Heart left ventricle (tissue), 16 donors: ENCODE measurements at regions of chr3 and their contacts with region 1.

Region 1: DNA sequence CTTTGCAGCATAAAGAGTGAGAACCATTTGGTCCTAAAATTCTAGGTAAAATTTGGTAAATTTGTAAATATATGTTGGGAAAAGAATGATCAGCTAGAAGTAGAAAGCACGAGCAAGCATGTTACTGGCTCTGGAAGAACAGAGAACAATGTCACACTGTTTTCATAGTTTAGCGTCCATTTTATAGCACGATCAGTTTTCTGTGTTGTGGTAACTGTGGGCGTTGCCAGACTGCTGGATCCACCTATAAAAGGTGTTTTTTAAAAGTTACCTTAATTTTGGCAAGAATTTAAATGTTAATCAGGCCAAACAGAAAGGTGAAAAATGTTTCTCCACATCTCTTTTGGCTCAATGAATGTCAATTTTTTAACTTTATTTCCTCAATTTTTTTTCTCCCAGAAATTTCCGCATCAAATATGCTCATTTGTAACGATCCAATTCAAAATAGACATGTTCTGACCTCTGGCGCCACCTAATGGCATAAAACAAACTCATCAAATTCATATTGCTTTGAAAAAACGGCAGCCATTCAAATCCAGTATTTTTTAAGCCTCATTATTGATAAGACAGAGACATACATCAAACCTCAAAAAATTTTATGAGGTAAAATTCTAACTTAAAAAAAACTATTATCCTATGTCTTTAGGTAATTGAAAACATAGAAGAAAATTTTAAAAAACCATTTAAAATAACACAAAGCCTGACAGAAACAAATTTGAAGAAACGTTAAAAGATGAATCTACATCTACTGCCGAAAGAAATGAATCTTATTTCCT is 5.5 kb upstream of the GP5 start:
- DNase-seq: no peak
- ATAC-seq: no peak
- H3K4me3 ChIP-seq: no peak overlapping the region
- H3K27ac ChIP-seq: no peak overlapping the region
- H3K4me1 ChIP-seq: no peaks in the 10 kb centered on the region
- H3K27me3 ChIP-seq: peaks cover 0 to 2% (median 0%) of the 10 kb centered on the region in 9 donors
- CTCF ChIP-seq: peak; percentile 60 to 80 (median 68)
- POLR2A ChIP-seq: no peak

Region 2: DNA sequence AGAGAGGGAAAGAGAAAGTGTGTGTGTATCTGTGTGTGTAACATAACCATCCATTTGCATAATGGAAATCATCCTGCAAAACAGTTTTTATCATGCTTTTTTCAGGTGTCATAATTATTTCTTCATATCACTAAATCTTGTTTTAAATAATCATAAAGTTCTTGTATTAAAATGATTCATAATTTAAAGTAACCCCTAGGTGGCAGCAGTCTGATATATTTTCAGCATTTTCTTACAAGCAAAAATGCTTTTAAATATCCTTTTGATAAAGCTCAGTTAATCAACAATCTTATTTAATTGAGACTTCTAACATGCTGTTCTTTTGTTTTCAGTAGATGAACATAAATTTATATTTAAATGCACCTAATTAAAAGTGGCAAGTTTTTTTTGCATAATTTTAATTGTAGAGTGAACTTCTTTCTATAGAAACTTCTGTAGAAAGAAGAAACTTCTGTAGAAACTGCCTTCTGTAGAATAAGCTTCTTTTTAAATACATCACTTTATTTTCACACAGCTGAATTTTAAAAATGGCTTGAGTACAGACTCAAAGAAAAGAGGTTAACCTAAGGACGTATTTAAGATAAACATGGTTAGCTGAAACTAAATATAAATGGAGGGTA is 739.1 kb before region 1 on chr3:
- intact Hi-C with region 1: loop called in 1 of 10 experiments (anchors 10 kb)
- DNase-seq: no peak
- ATAC-seq: no peak
- H3K4me3 ChIP-seq: no peak overlapping the region
- H3K27ac ChIP-seq: no peak overlapping the region
- H3K4me1 ChIP-seq: no peaks in the 10 kb centered on the region
- H3K27me3 ChIP-seq: no peaks in the 10 kb centered on the region
- CTCF ChIP-seq: peak; percentile 34 to 64 (median 51)
- POLR2A ChIP-seq: no peak

Region 3: DNA sequence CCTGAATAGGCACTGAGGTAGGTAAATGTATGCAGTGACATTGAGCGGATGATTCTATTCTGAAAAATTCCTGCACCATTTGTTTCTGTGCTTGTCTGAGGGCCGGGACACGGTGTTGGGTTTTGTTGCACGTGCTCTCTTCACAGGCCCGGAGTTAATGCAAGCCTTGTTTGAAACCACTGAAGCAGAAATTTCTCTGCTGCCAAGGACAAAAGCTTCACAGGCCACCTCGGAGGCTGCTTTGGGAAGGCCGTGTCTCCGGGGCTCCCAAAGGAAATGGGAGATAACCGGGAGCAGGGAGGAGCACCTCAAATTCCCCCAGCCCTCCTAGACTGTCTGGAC is 632.2 kb before region 1 on chr3:
- intact Hi-C with region 1: loop called in 1 of 10 experiments (anchors 10 kb)
- DNase-seq: no peak
- ATAC-seq: no peak
- H3K4me3 ChIP-seq: no peak overlapping the region
- H3K27ac ChIP-seq: no peak overlapping the region
- H3K4me1 ChIP-seq: no peaks in the 10 kb centered on the region
- H3K27me3 ChIP-seq: peaks cover 0 to 39% (median 11%) of the 10 kb centered on the region in 9 donors
- CTCF ChIP-seq: no peak
- POLR2A ChIP-seq: no peak

Region 4: DNA sequence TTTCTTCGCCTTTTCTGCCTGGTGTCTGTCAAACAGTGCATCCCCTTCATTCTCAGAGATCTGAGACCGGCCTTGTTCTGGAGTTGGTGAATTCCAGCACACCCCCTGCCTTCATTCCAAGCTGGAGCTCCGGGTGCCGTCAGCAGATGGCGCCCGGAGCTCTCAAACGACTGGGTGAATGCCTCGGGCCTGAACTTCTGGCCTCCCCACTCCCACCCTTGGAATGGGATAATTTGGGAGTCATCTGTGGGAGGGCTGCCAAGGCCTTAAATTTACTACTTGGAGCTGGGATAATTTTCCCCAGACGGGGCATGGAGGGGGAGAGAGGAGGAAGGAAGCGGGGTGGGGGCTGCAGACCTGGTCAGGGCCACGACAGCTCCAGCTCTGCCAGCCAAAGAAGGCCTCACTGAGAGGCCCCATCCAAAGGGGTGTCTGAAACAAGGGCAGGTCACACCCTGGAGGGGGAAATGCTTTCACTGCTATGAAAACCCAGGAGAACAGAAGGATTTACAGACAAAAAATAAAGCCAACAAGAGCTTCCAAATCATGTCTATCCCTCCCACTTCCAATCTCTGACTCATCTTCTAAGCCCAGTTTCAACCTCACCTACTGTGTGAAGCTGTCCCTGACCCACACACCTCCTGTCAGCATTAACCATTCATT is 623.6 kb before region 1 on chr3:
- intact Hi-C with region 1: loop called in 2 of 10 experiments (anchors 5 to 10 kb)
- DNase-seq: peak; percentile 66 to 84 (median 78)
- ATAC-seq: peak; percentile 78 to 94 (median 91)
- H3K4me3 ChIP-seq: no peak overlapping the region
- H3K27ac ChIP-seq: peak overlapping the region in 1 of 12 donors; percentile 44
- H3K4me1 ChIP-seq: peaks cover 0 to 16% (median 7%) of the 10 kb centered on the region in 12 donors
- H3K27me3 ChIP-seq: peaks cover 0 to 61% (median 29%) of the 10 kb centered on the region in 9 donors
- CTCF ChIP-seq: peak; percentile 57 to 87 (median 80)
- POLR2A ChIP-seq: no peak

Region 5: DNA sequence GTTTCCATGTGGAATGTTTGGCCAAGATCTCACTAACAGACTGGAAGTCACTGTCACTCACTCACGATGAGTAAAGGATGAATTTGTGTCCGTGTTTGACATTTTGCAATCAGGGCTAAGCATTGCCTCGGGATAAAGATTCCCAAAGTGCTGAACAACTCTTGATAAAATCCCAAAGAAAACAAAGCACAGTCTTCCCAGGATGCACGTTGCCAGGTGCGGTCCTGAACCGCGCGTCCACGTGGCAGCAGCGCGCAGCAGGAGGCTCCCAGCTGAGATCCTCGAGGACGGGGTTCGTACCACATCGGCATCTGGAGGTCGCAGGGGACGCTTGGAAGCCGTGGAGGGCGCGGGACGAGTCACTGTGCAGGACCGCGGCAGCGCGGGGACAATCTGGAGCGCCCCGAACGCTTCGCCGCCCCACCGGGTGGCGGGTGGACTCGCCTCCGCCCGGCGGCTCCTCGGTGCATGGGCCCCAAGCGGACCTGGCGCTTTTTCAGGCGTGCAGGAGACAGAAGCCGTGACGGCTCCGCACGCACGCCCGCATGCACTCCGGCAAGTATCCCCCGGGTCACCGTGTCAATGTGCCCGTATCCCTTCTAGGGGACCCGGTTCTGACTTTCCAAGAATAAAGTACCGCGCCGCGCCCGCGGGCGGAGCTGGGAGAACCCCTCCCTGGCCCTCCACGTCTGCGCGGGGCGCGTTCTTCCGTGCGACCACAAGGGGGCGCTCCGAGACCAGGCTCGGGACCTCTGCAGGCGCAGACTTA is 71.2 kb before region 1 on chr3:
- intact Hi-C with region 1: loop called (anchors 1 to 5 kb)
- DNase-seq: peak; percentile 82 to 94 (median 86)
- ATAC-seq: peak; percentile 87 to 92 (median 90)
- H3K4me3 ChIP-seq: peak overlapping the region in 11 of 12 donors; percentile 3 to 56 (median 46)
- H3K27ac ChIP-seq: no peak overlapping the region
- H3K4me1 ChIP-seq: peaks cover 0 to 28% (median 11%) of the 10 kb centered on the region in 12 donors
- H3K27me3 ChIP-seq: peaks cover 0 to 35% (median 13%) of the 10 kb centered on the region in 9 donors
- CTCF ChIP-seq: peak; percentile 98 to 100 (median 99)
- POLR2A ChIP-seq: no peak

Region 6: DNA sequence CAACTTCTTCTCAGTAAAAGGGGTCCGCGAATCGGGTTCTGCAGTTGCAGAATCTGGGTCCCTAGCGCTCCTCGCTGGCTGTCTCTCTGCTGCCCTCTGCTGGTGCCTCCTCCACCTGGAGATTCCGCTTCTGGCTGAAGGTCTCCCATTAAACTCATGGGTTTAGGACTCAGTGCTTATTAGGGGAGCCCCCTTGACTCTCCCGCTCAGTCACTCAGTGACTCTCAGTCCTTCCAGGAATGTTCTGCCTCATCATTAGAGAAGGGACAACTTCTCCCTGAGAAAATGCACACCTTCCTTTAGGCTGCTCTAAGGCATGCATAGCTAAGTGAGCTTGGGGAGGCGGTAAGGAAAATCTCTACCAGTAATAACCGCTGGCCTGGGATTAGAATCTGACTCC is 60.5 kb before region 1 on chr3:
- intact Hi-C with region 1: loop called in 2 of 10 experiments (anchors 5 kb)
- DNase-seq: peak; percentile 64 to 80 (median 75)
- ATAC-seq: peak in 3 of 4 donors; percentile 60 to 74 (median 73)
- H3K4me3 ChIP-seq: no peak overlapping the region
- H3K27ac ChIP-seq: no peak overlapping the region
- H3K4me1 ChIP-seq: no peaks in the 10 kb centered on the region
- H3K27me3 ChIP-seq: peaks cover 0 to 14% (median 0%) of the 10 kb centered on the region in 9 donors
- CTCF ChIP-seq: peak; percentile 38 to 98 (median 92)
- POLR2A ChIP-seq: no peak

Region 7: DNA sequence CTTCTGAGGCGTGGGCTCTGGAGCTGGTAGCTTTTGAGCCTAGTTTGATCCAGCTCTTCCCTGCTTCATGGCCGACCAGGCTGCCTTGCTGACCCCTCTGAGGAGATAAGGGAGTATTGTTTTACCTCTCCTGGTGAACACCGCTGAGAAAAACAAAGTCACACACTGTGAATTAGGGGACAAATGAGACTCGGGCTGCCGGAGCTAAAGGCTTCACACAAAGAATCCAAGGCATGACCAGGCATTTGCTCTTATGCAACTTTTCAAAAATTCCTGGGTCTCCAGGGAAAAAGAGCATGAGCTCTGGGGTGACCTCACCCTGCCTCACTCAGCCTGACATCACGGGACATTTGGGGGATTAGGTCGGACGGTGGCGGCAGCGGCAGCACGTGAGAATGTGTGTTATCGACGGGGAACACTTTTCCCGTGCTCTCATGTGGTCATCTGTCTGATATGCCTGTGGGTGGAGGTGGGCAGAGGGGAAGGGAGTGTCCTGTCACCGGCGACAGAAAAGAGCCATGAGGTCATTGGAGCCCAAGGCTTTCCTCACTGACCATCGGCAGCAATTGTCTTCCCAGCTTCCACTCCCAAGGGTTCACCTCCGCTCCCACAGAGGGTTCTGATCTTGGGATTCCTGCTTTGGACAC is 167.7 kb after region 1 on chr3:
- intact Hi-C with region 1: no loop called
- DNase-seq: peak; percentile 72 to 89 (median 76)
- ATAC-seq: peak; percentile 46 to 84 (median 68)
- H3K4me3 ChIP-seq: peak overlapping the region in 4 of 12 donors; percentile 0 to 19 (median 12)
- H3K27ac ChIP-seq: peak overlapping the region; percentile 55 to 91 (median 86)
- H3K4me1 ChIP-seq: peaks cover 0 to 68% (median 31%) of the 10 kb centered on the region in 12 donors
- H3K27me3 ChIP-seq: no peaks in the 10 kb centered on the region
- CTCF ChIP-seq: no peak
- POLR2A ChIP-seq: peak in 1 of 2 donors; percentile 36